Activated CD8-positive, alpha-beta T cell treated with anti-CD3 and anti-CD28 coated beads for 36 hours (primary cell): ENCODE measurements at regions of chr11 and their contacts with region 1.

Region 1: DNA sequence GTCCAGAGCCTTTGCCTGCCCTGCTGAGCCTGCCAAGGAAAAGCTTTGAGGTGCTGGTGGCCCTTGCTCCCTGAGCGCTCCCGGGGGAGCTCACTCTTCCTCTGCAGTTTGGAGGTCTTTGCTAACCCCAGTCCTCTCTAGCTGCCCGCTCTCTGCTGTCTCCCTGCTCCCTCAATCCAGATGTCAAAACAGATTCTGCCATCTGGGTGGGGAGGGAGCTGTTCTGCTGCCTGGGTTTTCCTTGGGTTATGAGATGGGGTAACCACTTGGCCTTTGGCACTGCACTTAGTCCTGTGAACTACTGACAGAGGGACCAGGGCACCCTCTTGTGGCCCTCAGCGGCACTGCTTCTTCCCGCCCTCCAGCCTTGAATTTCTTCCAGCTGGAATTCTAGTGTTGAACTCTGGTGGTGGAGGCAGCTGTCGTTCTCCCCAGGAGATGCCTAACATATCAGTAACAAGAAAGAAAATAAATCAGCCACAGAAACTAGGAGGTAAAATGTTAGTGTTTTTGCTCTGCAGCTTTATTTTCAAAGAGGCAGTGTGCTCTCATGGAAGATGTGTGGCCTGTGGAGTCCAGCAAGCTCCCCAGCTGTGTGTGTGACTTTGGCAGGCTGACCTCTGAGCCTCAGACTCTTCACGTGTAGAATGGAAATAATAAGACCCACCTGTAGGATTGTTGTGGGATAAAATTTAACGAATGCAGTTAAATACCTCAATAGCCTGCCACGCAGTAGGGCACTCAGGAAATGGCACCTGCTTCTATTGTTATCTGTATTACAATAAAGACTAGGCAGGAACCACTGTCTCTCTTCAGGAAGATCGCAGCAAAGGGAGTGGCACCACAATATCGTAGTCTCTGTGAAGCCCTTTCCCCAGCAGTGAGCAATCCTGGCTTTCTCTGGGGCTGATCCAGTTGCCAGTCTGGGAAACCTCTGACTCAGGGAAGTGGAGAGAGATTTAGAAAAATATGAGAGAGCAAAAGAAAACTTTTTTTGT is 23.4 kb downstream of the ARFGAP2 start:
- DNase-seq: peak; percentile 69
- ATAC-seq: peak; percentile 74
- H3K4me3 Mint-ChIP-seq: no peak overlapping the region
- H3K27ac Mint-ChIP-seq: peak overlapping the region; percentile 70
- H3K4me1 Mint-ChIP-seq: peaks cover 27% of the 10 kb centered on the region
- H3K27me3 Mint-ChIP-seq: no peaks in the 10 kb centered on the region
- CTCF ChIP-seq: peak; percentile 99

Region 2: GRCh38 chr11:46876471-46876870 is 276.8 kb before region 1 on chr11:
- CTCF ChIA-PET with region 1: interaction called, 13 read pairs
- POLR2A ChIA-PET with region 1: no interaction called
- intact Hi-C with region 1: no loop called
- DNase-seq: no peak
- ATAC-seq: no peak
- H3K4me3 Mint-ChIP-seq: no peak overlapping the region
- H3K27ac Mint-ChIP-seq: no peak overlapping the region
- H3K4me1 Mint-ChIP-seq: no peaks in the 10 kb centered on the region
- H3K27me3 Mint-ChIP-seq: peaks cover 2% of the 10 kb centered on the region
- CTCF ChIP-seq: no peak

Region 3: GRCh38 chr11:46906609-46907041 is 246.6 kb before region 1 on chr11:
- CTCF ChIA-PET with region 1: interaction called, 16 read pairs
- POLR2A ChIA-PET with region 1: no interaction called
- intact Hi-C with region 1: no loop called
- DNase-seq: no peak
- ATAC-seq: no peak
- H3K4me3 Mint-ChIP-seq: no peak overlapping the region
- H3K27ac Mint-ChIP-seq: no peak overlapping the region
- H3K4me1 Mint-ChIP-seq: no peaks in the 10 kb centered on the region
- H3K27me3 Mint-ChIP-seq: peaks cover 8% of the 10 kb centered on the region
- CTCF ChIP-seq: no peak

Region 4: GRCh38 chr11:46936138-46937110 is 216.8 kb before region 1 on chr11 and contains the start of gene CSTPP1:
- CTCF ChIA-PET with region 1: interaction called, 18 read pairs
- POLR2A ChIA-PET with region 1: no interaction called
- intact Hi-C with region 1: no loop called
- DNase-seq: peak; percentile 96
- ATAC-seq: peak; percentile 99
- H3K4me3 Mint-ChIP-seq: peak within 1 kb of the TSS; percentile 83
- H3K27ac Mint-ChIP-seq: peak within 1 kb of the TSS; percentile 85
- H3K4me1 Mint-ChIP-seq: peaks cover 14% of the 10 kb centered on the region
- H3K27me3 Mint-ChIP-seq: peaks cover 3% of the 10 kb centered on the region
- CTCF ChIP-seq: no peak
- total RNA-seq, gene CSTPP1: 12.8 to 14.4 TPM

Region 5: GRCh38 chr11:47130543-47130942 is 22.7 kb before region 1 on chr11:
- CTCF ChIA-PET with region 1: interaction called, 13 read pairs
- POLR2A ChIA-PET with region 1: no interaction called
- intact Hi-C with region 1: no loop called
- DNase-seq: no peak
- ATAC-seq: no peak
- H3K4me3 Mint-ChIP-seq: no peak overlapping the region
- H3K27ac Mint-ChIP-seq: no peak overlapping the region
- H3K4me1 Mint-ChIP-seq: no peaks in the 10 kb centered on the region
- H3K27me3 Mint-ChIP-seq: no peaks in the 10 kb centered on the region
- CTCF ChIP-seq: no peak

Region 6: DNA sequence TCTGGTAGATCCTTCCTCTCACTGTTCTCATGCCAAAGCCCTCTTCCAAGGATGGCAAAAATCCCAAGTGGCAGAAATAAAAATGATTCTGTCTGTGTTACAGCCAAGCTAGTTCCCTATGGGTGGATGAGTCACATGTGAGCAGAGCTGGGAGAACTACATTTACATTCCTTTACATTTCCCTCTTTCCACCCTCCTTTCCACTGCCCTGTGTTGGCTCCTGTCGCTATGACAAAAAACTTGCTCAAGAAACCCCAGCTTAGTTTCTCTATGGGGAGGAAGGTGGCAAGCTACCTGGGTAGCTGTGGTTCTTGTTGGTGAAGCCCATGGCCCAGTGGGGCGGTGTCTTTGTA is 51.4 kb after region 1 on chr11:
- CTCF ChIA-PET with region 1: no interaction called
- POLR2A ChIA-PET with region 1: no interaction called
- intact Hi-C with region 1: no loop called
- DNase-seq: no peak
- ATAC-seq: no peak
- H3K4me3 Mint-ChIP-seq: no peak overlapping the region
- H3K27ac Mint-ChIP-seq: no peak overlapping the region
- H3K4me1 Mint-ChIP-seq: no peaks in the 10 kb centered on the region
- H3K27me3 Mint-ChIP-seq: peaks cover 2% of the 10 kb centered on the region
- CTCF ChIP-seq: no peak

Region 7: DNA sequence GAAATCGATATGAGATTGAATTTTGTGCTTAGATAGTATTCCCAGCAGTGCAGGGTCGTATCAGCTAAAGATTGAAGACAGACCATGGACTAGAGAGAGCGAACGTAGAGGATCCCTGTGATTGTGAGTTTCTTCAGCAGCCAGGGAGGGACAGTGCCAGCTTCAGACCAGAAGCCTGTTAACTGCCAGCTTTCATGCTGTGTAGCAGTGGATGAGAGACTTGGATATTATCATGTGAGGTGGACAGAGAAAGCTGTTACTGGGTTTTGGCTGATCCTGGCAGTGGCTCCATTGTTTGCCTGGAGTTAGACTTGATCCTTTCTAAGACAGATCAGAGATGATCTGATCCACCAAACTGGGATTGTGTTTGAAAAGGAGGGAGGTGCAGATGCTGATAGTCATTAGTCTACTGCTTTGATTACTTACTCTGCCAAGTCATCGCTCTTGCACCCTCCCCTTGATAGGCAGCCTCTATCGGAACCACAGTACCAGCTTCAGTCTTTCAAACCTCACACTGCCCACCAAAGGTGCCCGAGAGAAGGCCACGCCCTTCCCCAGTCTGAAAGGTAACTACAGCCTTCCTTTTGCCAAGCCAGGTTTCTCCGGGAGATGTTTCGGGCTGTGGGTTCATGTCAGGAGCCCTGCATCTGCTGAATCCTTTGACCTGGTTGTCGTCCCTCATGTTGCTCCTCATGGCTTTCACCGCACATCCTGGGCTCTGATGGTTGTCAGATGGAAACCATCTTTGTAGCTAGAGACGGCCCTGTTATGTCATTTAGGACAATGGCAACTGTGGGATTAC is 132.9 kb after region 1 on chr11:
- CTCF ChIA-PET with region 1: no interaction called
- POLR2A ChIA-PET with region 1: no interaction called
- intact Hi-C with region 1: no loop called
- DNase-seq: no peak
- ATAC-seq: no peak
- H3K4me3 Mint-ChIP-seq: no peak overlapping the region
- H3K27ac Mint-ChIP-seq: no peak overlapping the region
- H3K4me1 Mint-ChIP-seq: no peaks in the 10 kb centered on the region
- H3K27me3 Mint-ChIP-seq: no peaks in the 10 kb centered on the region
- CTCF ChIP-seq: no peak